OCI-LY7 (cell line): ENCODE measurements at regions of chr14 and their contacts with region 1.

Region 1: DNA sequence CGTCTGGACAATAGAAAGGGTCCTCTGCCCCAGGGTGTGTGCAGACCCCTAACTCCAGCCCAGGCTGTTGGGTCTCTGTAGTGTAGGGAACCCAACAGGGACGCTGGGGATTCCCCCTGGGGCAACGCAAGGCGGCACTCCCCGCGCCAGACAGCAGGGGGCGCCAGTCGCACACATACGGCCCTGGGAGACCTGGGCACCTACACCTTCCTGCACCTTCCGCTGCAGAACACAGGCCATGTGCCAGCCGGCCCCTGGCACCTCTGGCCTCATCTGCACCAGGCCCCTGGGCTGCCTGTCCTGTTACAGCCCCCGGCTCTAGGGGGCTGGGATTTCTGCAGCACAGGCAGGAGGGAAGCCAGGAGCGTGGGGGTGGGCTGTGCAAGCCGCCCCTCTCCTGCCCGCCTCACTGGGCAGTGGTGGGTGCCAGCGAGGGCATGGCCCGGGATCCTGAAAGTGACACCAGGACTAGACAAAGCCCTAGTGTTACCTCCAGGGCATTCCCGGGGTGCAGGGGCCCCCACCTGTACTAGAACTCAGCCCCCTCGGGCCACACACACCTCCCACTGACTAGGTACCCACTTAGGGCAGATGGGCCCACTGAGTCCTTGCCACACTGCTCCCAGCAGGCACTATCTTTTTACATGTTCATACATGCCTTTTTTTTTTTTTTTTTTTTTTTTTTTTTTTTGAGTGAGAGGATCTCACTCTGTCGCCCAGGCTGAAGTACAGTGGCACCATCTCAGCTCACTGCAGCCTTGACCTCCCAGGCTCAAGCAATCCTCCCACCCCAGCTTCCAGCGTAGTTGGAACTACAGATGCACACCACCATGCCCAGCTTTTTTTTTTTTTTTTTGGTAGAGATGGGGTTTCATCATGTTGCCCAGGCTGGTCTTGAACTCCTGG is 37.5 kb downstream of the CCNK start:
- DNase-seq: peak; percentile 72
- H3K4me3 ChIP-seq: no peak overlapping the region
- H3K27ac ChIP-seq: no peak overlapping the region
- H3K4me1 ChIP-seq: no peaks in the 10 kb centered on the region
- CTCF ChIP-seq: peak; percentile 86

Region 2: DNA sequence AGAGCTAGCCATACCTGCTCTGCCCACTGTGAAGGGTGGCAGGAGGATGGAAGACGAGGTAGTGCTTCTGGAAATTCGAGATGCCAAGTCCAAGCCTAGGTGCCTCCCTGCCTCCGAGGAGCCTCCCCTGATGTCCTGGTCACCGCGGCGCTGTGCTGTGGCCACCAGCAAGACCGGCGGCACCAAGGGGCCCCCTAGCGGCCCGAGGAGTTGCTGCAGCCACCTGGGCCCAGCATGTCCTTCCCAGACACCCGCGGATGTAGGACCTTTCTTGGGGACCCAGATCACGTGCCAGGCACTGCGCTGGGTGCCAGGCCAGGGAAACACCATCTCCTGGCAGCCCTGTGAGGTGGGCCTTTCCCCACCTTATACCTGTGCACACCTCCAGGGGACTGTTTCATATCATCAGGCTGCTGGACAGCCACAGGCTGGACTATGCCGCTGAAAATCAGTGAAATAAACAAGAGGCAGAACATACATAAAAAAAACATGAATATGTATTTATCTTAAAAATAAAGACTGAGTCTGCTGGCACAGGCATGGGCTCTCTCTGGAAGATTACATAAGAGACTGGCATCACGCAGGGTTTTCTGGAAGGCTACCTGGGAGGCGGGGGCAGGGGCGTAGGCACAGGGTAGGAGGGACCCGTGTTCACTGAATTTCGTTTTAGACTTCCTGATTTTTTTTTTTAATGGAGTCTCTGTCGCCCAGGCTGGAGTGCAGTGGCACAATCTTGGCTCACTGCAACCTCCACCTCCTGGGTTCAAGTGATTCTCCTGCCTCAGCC is 110.3 kb after region 1 on chr14:
- CTCF ChIA-PET with region 1: no interaction called
- POLR2A ChIA-PET with region 1: no interaction called
- intact Hi-C with region 1: loop called (anchors 1 kb)
- DNase-seq: peak; percentile 66
- H3K4me3 ChIP-seq: no peak overlapping the region
- H3K27ac ChIP-seq: no peak overlapping the region
- H3K4me1 ChIP-seq: peaks cover 21% of the 10 kb centered on the region
- CTCF ChIP-seq: peak; percentile 95

Region 3: GRCh38 chr14:99729991-99730868 is 211.5 kb after region 1 on chr14:
- CTCF ChIA-PET with region 1: no interaction called
- POLR2A ChIA-PET with region 1: no interaction called
- intact Hi-C with region 1: loop called (anchors 5 kb)
- DNase-seq: peak; percentile 54
- H3K4me3 ChIP-seq: no peak overlapping the region
- H3K27ac ChIP-seq: no peak overlapping the region
- H3K4me1 ChIP-seq: no peaks in the 10 kb centered on the region
- CTCF ChIP-seq: peak; percentile 84